ENCODE measurements at regions of chr4 and their contacts with region 1.

Region 1: GRCh38 chr4:51842554-51843308 is at the start of gene DCUN1D4:
- DNase-seq: peak; percentile 93 to 98 (median 95)
- ATAC-seq: peak; percentile 94
- H3K4me3 ChIP-seq: peak within 1 kb of the TSS; percentile 85
- H3K4me3 Mint-ChIP-seq: peak within 1 kb of the TSS; percentile 92 to 100 (median 96)
- H3K27ac ChIP-seq: peak within 1 kb of the TSS; percentile 76
- H3K27ac Mint-ChIP-seq: peak within 1 kb of the TSS; percentile 87 to 98 (median 92)
- H3K4me1 ChIP-seq: peaks cover 4% of the 10 kb centered on the region in 2 donors
- H3K4me1 Mint-ChIP-seq: peaks cover 9 to 29% (median 23%) of the 10 kb centered on the region in 7 donors
- H3K27me3 ChIP-seq: no peaks in the 10 kb centered on the region
- H3K27me3 Mint-ChIP-seq: peaks cover 0 to 11% (median 0%) of the 10 kb centered on the region in 5 donors
- total RNA-seq, gene DCUN1D4: 31.3 to 60.7 (median 35.3) TPM

Region 2: DNA sequence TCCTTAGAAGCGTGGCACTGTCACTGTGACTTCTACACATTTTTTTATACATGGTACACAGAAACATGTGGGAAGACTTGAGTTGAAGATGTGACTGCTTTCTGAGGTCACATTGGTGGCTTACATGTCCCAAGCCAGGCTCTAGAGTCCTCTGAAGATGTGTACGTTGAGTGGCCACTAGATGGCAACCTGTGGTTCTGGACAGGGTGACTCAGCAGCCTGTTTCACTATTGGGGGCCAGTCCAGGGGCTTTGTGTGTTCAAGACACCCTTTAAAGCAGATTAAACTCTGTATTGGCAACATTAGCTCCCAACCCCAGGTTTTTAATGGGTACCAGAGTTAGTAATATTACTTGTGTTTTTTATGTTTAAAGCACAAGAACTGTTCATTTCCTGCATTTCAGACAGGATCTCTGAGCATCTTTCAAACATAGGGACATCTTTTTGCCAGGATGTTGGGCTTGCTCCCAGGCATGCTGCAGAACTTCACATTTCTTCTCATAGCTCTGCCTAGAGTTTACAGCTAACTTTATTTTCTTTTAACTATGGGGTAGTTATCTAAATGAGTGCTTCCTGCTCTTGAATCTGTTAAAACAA is 53.2 kb after region 1 on chr4:
- CTCF ChIA-PET with region 1: no interaction called
- POLR2A ChIA-PET with region 1: no interaction called
- intact Hi-C with region 1: loop called (anchors 1 to 2 kb)
- DNase-seq: peak in 7 of 9 donors; percentile 13 to 37 (median 24)
- ATAC-seq: peak; percentile 92
- H3K4me3 ChIP-seq: no peak overlapping the region
- H3K4me3 Mint-ChIP-seq: no peak overlapping the region
- H3K27ac ChIP-seq: no peak overlapping the region
- H3K27ac Mint-ChIP-seq: peak overlapping the region in 1 of 9 donors; percentile 29
- H3K4me1 ChIP-seq: no peaks in the 10 kb centered on the region
- H3K4me1 Mint-ChIP-seq: peaks cover 0 to 15% (median 0%) of the 10 kb centered on the region in 7 donors
- H3K27me3 ChIP-seq: no peaks in the 10 kb centered on the region
- H3K27me3 Mint-ChIP-seq: no peaks in the 10 kb centered on the region

Region 3: GRCh38 chr4:52410971-52411370 is 568.2 kb after region 1 on chr4:
- CTCF ChIA-PET with region 1: no interaction called
- POLR2A ChIA-PET with region 1: no interaction called
- intact Hi-C with region 1: no loop called
- DNase-seq: no peak
- ATAC-seq: no peak
- H3K4me3 ChIP-seq: no peak overlapping the region
- H3K4me3 Mint-ChIP-seq: no peak overlapping the region
- H3K27ac ChIP-seq: no peak overlapping the region
- H3K27ac Mint-ChIP-seq: no peak overlapping the region
- H3K4me1 ChIP-seq: no peaks in the 10 kb centered on the region
- H3K4me1 Mint-ChIP-seq: no peaks in the 10 kb centered on the region
- H3K27me3 ChIP-seq: no peaks in the 10 kb centered on the region
- H3K27me3 Mint-ChIP-seq: peaks cover 0 to 28% (median 18%) of the 10 kb centered on the region in 5 donors

Region 4: GRCh38 chr4:52659001-52659721 is 816.4 kb after region 1 on chr4 and contains the start of gene USP46:
- CTCF ChIA-PET with region 1: no interaction called
- POLR2A ChIA-PET with region 1: no interaction called
- intact Hi-C with region 1: loop called (anchors 5 to 10 kb)
- DNase-seq: peak in 7 of 9 donors; percentile 3 to 65 (median 15)
- ATAC-seq: peak; percentile 86
- H3K4me3 ChIP-seq: peak within 1 kb of the TSS; percentile 52
- H3K4me3 Mint-ChIP-seq: peak within 1 kb of the TSS; percentile 83 to 92 (median 87)
- H3K27ac ChIP-seq: peak within 1 kb of the TSS; percentile 37
- H3K27ac Mint-ChIP-seq: peak within 1 kb of the TSS in 6 of 9 donors; percentile 12 to 77 (median 58)
- H3K4me1 ChIP-seq: peaks cover 5% of the 10 kb centered on the region in 2 donors
- H3K4me1 Mint-ChIP-seq: peaks cover 12 to 23% (median 17%) of the 10 kb centered on the region in 7 donors
- H3K27me3 ChIP-seq: no peaks in the 10 kb centered on the region
- H3K27me3 Mint-ChIP-seq: peaks cover 0 to 24% (median 16%) of the 10 kb centered on the region in 5 donors
- total RNA-seq, gene USP46: 3.0 to 11.7 (median 4.0) TPM

Region 5: GRCh38 chr4:52721968-52722815 is 879.5 kb after region 1 on chr4:
- CTCF ChIA-PET with region 1: no interaction called
- POLR2A ChIA-PET with region 1: no interaction called
- intact Hi-C with region 1: loop called in 1 of 2 experiments (anchors 1 kb)
- DNase-seq: peak; percentile 62 to 87 (median 81)
- ATAC-seq: peak; percentile 99
- H3K4me3 ChIP-seq: peak overlapping the region; percentile 83
- H3K4me3 Mint-ChIP-seq: peak overlapping the region; percentile 55 to 90 (median 79)
- H3K27ac ChIP-seq: peak overlapping the region; percentile 86
- H3K27ac Mint-ChIP-seq: peak overlapping the region; percentile 54 to 95 (median 86)
- H3K4me1 ChIP-seq: no peaks in the 10 kb centered on the region
- H3K4me1 Mint-ChIP-seq: peaks cover 5 to 14% (median 11%) of the 10 kb centered on the region in 7 donors
- H3K27me3 ChIP-seq: no peaks in the 10 kb centered on the region
- H3K27me3 Mint-ChIP-seq: peaks cover 0 to 11% (median 0%) of the 10 kb centered on the region in 5 donors

Region 6: DNA sequence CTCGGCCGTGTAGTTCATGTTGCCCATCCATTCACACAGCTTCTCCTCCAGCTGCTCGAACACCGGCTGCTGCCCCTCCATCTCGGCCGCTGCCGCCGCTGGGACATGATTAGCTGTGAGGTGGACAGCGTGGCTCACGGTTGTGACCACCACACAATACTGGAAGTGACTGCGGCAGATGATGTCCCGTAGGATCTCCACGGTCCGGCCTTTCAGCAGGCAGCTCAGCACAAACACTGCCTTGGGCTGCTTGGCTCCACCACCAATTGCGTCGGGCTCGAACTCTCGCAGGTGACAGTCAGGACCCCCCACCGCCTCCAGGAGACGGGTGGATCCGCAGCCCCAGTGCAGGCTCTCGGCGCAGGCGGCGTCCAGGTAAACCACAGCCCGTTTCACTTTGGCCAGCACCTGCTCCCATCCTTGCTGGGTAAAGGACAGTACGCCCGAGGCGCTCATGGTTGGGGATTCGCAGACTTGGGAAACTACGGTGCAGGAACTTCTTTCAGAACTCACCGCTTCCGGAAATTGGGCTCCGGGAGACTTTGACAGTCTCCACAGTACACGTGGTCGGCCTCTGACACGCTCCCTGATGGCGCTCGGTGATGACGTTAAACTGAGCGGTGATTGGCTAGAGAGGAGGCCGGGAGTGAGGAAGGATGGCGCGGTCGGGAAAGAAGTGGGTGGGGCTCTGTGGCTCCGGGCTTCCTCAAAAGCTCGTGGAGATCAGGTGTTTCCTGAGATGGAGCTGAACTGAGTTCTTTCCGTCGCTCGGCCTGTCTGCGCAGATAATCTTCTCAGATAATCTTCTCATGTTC is 1523.0 kb after region 1 on chr4 and contains the start of gene SCFD2:
- CTCF ChIA-PET with region 1: no interaction called
- POLR2A ChIA-PET with region 1: no interaction called
- intact Hi-C with region 1: loop called in 1 of 2 experiments (anchors 1 kb)
- DNase-seq: peak; percentile 86 to 97 (median 94)
- ATAC-seq: peak; percentile 99
- H3K4me3 ChIP-seq: peak within 1 kb of the TSS; percentile 72
- H3K4me3 Mint-ChIP-seq: peak within 1 kb of the TSS; percentile 92 to 99 (median 96)
- H3K27ac ChIP-seq: peak within 1 kb of the TSS; percentile 85
- H3K27ac Mint-ChIP-seq: peak within 1 kb of the TSS; percentile 95 to 99 (median 96)
- H3K4me1 ChIP-seq: peaks cover 7 to 23% of the 10 kb centered on the region in 2 donors
- H3K4me1 Mint-ChIP-seq: peaks cover 32 to 64% (median 50%) of the 10 kb centered on the region in 7 donors
- H3K27me3 ChIP-seq: no peaks in the 10 kb centered on the region
- H3K27me3 Mint-ChIP-seq: peaks cover 0 to 20% (median 3%) of the 10 kb centered on the region in 5 donors
- total RNA-seq, gene SCFD2: 13.4 to 32.8 (median 28.0) TPM

Measured in naive thymus-derived CD4-positive, alpha-beta T cell (primary cell).